HEK293 (cell line): ENCODE measurements at regions of chr22 and their contacts with region 1.

Region 1: DNA sequence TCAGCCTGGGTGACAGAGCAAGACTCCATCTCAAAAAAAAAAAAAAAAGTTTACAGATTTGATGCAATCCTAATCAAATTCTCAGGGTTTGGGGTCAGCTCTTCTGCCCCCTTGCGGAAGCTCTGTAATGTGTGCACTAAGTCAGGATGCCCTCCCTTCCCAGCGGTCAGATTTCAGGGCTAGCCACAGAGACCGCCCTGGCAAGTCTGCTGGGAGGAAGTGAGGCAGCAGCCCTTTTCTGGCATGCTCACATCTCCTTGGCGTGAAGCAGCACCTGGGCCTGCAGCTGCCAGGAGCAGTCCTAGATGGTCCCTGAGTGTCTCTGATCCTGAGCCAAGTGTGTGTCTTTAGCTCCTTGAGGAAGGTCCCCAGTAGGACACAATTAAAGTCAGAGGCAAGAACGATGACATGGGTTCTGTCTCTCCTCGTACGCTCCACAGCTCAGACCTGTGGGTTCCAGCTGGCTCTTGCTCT is 10.9 kb upstream of the APOBEC3C start:
- H3K4me3 ChIP-seq: no peak overlapping the region
- H3K27ac ChIP-seq: no peak overlapping the region
- H3K4me1 ChIP-seq: no peaks in the 10 kb centered on the region
- CTCF ChIP-seq: peak; percentile 76

Region 2: GRCh38 chr22:38973289-38974169 is 29.7 kb before region 1 on chr22:
- CTCF ChIA-PET with region 1: interaction called, 44 read pairs
- POLR2A ChIA-PET with region 1: interaction called, 5 read pairs
- H3K4me3 ChIP-seq: no peak overlapping the region
- H3K27ac ChIP-seq: no peak overlapping the region
- H3K4me1 ChIP-seq: no peaks in the 10 kb centered on the region
- CTCF ChIP-seq: peak; percentile 77

Region 3: GRCh38 chr22:38981992-38982927 is 20.9 kb before region 1 on chr22 and contains the start of gene APOBEC3B:
- CTCF ChIA-PET with region 1: interaction called, 26 read pairs
- POLR2A ChIA-PET with region 1: interaction called, 7 read pairs
- H3K4me3 ChIP-seq: peak within 1 kb of the TSS; percentile 13
- H3K27ac ChIP-seq: peak within 1 kb of the TSS; percentile 39; the same call in 1 of the 2 replicates
- H3K4me1 ChIP-seq: peaks cover 2% of the 10 kb centered on the region; the same call in 1 of the 2 replicates
- CTCF ChIP-seq: no peak

Region 4: GRCh38 chr22:38989466-38989865 is 13.7 kb before region 1 on chr22:
- CTCF ChIA-PET with region 1: interaction called, 13 read pairs
- POLR2A ChIA-PET with region 1: interaction called, 3 read pairs
- H3K4me3 ChIP-seq: no peak overlapping the region
- H3K27ac ChIP-seq: no peak overlapping the region
- H3K4me1 ChIP-seq: no peaks in the 10 kb centered on the region; the same call in 1 of the 2 replicates
- CTCF ChIP-seq: no peak

Region 5: DNA sequence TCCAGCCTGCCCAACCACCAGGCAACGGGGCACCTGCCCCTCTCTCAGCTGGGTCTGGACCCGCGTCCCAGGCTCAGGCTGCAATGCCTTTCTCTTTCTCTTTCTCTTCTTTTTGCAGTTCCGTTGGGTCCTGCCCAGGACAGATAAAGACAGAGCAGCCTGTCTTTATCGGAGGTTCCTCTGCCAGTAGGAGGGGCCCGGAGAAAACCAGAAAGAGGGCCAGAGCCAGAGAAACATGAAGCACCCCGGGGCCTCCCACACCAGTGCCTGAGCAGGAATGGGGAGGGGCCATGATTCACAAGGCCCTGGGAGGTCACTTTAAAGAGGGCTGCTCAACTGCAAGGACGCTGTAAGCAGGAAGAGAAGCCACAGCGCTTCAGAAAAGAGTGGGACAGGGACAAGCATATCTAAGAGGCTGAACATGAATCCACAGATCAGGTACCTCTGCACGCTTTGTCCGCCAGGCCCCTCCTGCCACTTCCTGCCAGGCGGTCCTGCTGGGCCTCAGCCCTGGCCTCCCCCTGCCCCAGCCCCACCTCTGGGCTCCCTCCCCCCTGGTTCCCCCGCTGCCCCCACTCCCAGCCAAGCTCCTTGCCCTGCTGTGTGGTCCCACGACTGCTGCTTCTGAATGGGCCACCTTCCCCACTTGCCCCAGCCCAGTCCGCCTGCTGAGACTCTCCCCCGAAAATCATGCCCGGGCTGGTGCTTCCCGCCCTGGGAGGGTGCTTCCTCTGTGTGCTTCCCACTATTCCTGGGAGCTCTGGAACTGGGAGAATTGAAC is 10.9 kb after region 1 on chr22 and contains the start of gene APOBEC3C:
- CTCF ChIA-PET with region 1: interaction called, 15 read pairs
- POLR2A ChIA-PET with region 1: interaction called, 3 read pairs
- H3K4me3 ChIP-seq: peak within 1 kb of the TSS; percentile 53
- H3K27ac ChIP-seq: peak within 1 kb of the TSS; percentile 85
- H3K4me1 ChIP-seq: no peaks in the 10 kb centered on the region
- CTCF ChIP-seq: no peak

Region 6: DNA sequence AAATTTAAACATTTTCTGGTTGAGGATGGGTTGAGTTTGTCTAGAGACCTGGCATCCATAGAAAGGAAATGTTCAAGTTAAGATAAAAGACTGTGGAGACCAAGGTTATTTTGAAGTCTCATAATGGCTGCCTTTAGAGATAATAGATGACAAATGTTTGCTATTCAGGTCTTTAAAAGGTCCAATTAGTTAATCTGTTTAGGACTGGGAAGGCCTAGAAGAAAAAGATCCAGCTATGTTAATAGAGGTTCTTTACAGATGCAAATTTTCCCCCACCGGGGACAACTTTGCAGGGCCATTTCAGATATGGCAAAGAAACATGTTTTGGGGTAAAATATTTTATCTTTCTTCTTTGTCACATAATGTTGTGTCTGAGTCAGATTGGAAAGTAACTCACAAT is 70.7 kb after region 1 on chr22:
- CTCF ChIA-PET with region 1: no interaction called
- POLR2A ChIA-PET with region 1: no interaction called
- H3K4me3 ChIP-seq: no peak overlapping the region
- H3K27ac ChIP-seq: no peak overlapping the region
- H3K4me1 ChIP-seq: no peaks in the 10 kb centered on the region
- CTCF ChIP-seq: no peak

Region 7: GRCh38 chr22:39117585-39118191 is 114.5 kb after region 1 on chr22:
- CTCF ChIA-PET with region 1: interaction called, 13 read pairs
- POLR2A ChIA-PET with region 1: interaction called, 4 read pairs
- H3K4me3 ChIP-seq: no peak overlapping the region
- H3K27ac ChIP-seq: no peak overlapping the region
- H3K4me1 ChIP-seq: no peaks in the 10 kb centered on the region
- CTCF ChIP-seq: no peak